ENCODE measurements at regions of chr16 and their contacts with region 1.

Region 1: GRCh38 chr16:52976539-52977167 is 76.0 kb downstream of the CHD9NB start:
- DNase-seq: peak in 1 of 2 donors; percentile 4
- ATAC-seq: peak in 1 of 8 donors; percentile 29
- H3K4me3 ChIP-seq: no peak overlapping the region
- H3K27ac ChIP-seq: no peak overlapping the region
- H3K4me1 ChIP-seq: no peaks in the 10 kb centered on the region
- H3K27me3 ChIP-seq: peaks cover 0 to 5% (median 0%) of the 10 kb centered on the region in 7 donors
- CTCF ChIP-seq: peak in 7 of 9 donors; percentile 27 to 50 (median 42)

Region 2: GRCh38 chr16:53014287-53014686 is 37.6 kb after region 1 on chr16:
- intact Hi-C with region 1: no loop called
- DNase-seq: no peak
- ATAC-seq: no peak
- H3K4me3 ChIP-seq: no peak overlapping the region
- H3K27ac ChIP-seq: no peak overlapping the region
- H3K4me1 ChIP-seq: peaks cover 0 to 5% (median 0%) of the 10 kb centered on the region in 9 donors
- H3K27me3 ChIP-seq: peaks cover 0 to 9% (median 0%) of the 10 kb centered on the region in 7 donors
- CTCF ChIP-seq: no peak

Region 3: GRCh38 chr16:53031323-53031942 is 54.8 kb after region 1 on chr16:
- intact Hi-C with region 1: loop called in 1 of 10 experiments (anchors 10 kb)
- DNase-seq: no peak
- ATAC-seq: peak in 2 of 8 donors; percentile 38 to 71
- H3K4me3 ChIP-seq: no peak overlapping the region
- H3K27ac ChIP-seq: peak overlapping the region in 1 of 10 donors; percentile 11
- H3K4me1 ChIP-seq: no peaks in the 10 kb centered on the region
- H3K27me3 ChIP-seq: no peaks in the 10 kb centered on the region
- CTCF ChIP-seq: no peak